Activated T-helper 1 cell treated with anti-CD3 and anti-CD28 coated beads, Interleukin-12 subunit alpha, Interleukin-12 subunit beta, Interleukin-2, Interleukin-4 antibody, amounts not matched to agents 30 ng/mL and 10 ng/mL and 1 ng/mL, durations not matched to agents 14 hours and 24 hours and 36 hours (primary cell): ENCODE measurements at regions of chr3 and their contacts with region 1.

Region 1: DNA sequence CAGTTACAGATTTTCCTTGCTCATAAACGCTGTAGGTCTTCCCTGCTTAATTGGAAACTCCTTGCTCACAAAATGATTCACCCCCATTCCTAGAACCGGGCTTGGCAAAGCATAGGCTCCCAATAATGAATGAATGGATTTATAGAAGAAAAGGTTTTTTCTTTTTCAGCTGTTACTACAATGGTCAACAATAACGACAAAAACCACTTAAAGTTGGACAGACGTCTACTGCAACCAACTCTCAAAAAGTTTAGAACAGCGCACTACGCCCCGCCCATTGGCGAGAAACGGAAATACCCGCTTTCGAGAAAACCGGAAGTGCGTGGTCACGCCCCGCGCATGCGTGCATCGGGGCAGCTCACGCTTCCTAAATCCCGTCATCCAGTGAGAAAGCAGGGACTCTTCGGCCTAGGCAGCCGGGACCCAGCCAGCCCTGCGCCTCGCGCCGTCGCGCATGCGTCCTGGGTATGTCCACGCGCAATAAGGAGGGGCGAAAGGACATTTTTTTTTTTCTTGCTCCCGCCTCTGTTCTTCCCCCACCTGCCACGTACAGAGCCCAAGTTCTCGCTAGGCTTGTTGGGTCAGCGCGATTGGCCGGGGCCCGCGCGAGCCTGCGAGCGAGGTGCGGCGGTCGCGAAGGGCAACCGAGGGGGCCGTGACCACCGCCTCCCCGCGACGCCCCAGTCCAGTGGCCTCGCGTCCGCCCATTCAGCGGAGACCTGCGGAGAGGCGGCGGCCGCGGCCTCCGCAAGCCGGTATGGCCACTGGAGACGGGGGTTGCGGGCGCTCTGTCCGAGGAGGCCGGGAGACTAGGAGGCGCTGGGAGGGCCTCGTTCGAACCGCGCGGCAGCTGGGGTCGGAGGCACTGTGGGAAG is at the start of gene TFG:
- DNase-seq: peak; percentile 98
- H3K4me3 Mint-ChIP-seq: peak within 1 kb of the TSS; percentile 84
- H3K27ac Mint-ChIP-seq: peak within 1 kb of the TSS; percentile 90
- H3K4me1 Mint-ChIP-seq: peaks cover 33% of the 10 kb centered on the region
- H3K27me3 Mint-ChIP-seq: no peaks in the 10 kb centered on the region
- total RNA-seq, gene TFG: 73.0 and 75.3 TPM in 2 replicates

Region 2: DNA sequence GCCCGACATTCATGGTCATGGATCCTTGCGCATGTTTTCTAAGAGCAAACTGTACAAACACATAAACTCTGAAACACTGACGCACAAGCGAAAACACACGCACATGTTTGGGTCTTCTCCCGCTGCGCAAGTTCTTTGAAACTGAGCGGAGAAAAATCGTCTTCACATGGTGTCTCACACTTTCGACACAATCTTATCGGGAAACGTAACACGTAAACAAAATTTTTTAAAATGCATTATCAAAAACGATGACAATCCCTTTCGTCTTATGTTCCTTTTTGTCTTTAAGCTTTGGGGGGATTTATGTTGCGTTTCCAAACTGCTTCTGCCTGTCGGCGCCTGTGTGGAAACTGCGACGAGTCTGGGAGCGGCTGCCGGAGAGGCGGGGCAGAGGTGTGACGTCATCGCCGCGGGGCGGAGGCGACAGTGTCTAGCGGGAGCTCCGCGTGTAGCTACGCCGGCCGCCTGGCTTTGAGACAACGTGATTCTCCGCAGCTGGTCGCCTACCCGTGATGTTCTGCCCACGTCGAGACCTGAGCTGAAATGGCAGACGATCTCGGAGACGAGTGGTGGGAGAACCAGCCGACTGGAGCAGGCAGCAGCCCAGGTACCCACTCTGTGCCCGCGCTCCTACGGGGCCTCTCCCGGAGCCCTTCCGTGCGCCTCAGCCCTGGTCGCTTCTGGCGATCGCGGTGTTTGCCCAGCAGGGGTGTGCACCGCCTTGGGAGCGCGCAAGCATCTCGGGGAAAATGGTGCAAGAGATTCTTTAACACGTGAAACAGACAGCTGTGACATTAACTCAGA is 891.6 kb before region 1 on chr3 and contains the start of gene CMSS1:
- intact Hi-C with region 1: loop called (anchors 1 kb)
- DNase-seq: peak; percentile 92
- H3K4me3 Mint-ChIP-seq: peak within 1 kb of the TSS; percentile 88
- H3K27ac Mint-ChIP-seq: peak within 1 kb of the TSS; percentile 90
- H3K4me1 Mint-ChIP-seq: peaks cover 35% of the 10 kb centered on the region
- H3K27me3 Mint-ChIP-seq: no peaks in the 10 kb centered on the region
- total RNA-seq, gene CMSS1: 108 and 121 TPM in 2 replicates

Region 3: GRCh38 chr3:100316641-100317069 is 392.5 kb before region 1 on chr3:
- intact Hi-C with region 1: loop called (anchors 5 kb)
- DNase-seq: peak; percentile 28
- H3K4me3 Mint-ChIP-seq: no peak overlapping the region
- H3K27ac Mint-ChIP-seq: peak overlapping the region; percentile 18
- H3K4me1 Mint-ChIP-seq: peaks cover 15% of the 10 kb centered on the region
- H3K27me3 Mint-ChIP-seq: no peaks in the 10 kb centered on the region

Region 4: GRCh38 chr3:100463002-100463401 is 246.2 kb before region 1 on chr3:
- intact Hi-C with region 1: loop called (anchors 10 kb)
- DNase-seq: no peak
- H3K4me3 Mint-ChIP-seq: no peak overlapping the region
- H3K27ac Mint-ChIP-seq: no peak overlapping the region
- H3K4me1 Mint-ChIP-seq: peaks cover 11% of the 10 kb centered on the region
- H3K27me3 Mint-ChIP-seq: peaks cover 2% of the 10 kb centered on the region

Region 5: GRCh38 chr3:100650651-100651611 is 58.3 kb before region 1 on chr3:
- intact Hi-C with region 1: loop called (anchors 1 kb)
- DNase-seq: no peak
- H3K4me3 Mint-ChIP-seq: peak overlapping the region; percentile 7
- H3K27ac Mint-ChIP-seq: peak overlapping the region; percentile 32
- H3K4me1 Mint-ChIP-seq: peaks cover 13% of the 10 kb centered on the region
- H3K27me3 Mint-ChIP-seq: no peaks in the 10 kb centered on the region

Region 6: DNA sequence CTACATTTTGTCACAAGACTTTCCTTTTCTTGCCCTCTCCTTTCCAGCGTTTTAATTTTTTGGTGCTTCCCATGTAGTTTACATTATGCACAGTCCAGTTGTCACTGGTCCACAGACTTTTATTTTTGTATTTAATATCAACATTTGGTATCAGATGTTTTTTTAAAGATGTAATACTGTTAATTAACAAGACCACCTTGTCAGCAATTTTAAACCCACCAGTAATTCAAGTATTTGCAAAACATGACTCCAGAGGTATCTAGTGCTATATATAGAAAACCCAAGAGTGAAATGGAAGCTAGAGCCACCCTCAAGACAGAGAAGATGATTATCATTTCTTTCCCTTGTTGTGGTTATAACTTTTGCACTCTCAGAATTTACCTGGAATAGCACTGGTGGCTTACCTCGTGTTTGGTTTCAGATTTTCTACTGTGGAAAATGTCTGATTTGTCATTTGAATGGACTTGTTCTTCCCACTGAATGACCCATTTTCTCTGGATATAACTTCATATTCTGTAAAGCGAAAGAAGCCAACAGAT is 56.3 kb after region 1 on chr3:
- intact Hi-C with region 1: loop called (anchors 1 kb)
- DNase-seq: no peak
- H3K4me3 Mint-ChIP-seq: no peak overlapping the region
- H3K27ac Mint-ChIP-seq: no peak overlapping the region
- H3K4me1 Mint-ChIP-seq: peaks cover 9% of the 10 kb centered on the region
- H3K27me3 Mint-ChIP-seq: peaks cover 5% of the 10 kb centered on the region

Region 7: DNA sequence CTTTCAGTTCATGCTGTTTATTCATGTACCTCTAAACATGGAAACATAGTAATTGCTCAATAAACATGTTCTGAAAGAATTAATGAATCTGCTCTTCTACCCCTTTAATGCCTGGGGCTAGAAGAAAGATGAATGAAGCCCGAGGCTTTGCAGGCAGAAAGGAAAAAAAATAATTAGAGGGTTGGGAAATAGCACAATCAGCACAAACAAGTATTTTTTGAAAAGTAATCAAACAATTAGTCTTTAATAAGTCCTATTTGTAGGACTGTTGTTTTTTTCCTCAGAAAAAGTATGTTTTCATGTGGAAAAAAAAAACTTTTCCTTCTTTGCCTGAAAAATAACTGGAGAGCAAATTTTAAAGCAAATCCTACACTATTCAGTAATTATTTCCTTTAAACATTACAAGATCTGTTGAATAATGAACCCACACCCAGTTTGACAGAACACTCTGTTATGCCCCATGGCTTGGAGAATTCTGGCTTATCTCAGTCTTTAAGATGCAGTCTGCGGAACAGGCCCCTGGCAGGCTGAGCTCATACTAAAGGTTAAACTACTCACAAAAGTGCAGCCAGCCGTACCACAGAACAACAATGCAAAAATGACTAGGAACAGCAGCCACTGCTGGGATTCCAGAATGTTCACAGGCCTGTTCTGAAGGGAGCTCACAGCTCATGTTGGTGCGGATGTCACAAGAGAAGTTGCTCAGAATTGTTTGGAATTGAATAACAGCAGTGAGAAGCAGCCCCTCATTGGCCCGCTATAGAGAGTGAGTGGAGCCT is 204.9 kb after region 1 on chr3:
- intact Hi-C with region 1: no loop called
- DNase-seq: no peak
- H3K4me3 Mint-ChIP-seq: no peak overlapping the region
- H3K27ac Mint-ChIP-seq: no peak overlapping the region
- H3K4me1 Mint-ChIP-seq: no peaks in the 10 kb centered on the region
- H3K27me3 Mint-ChIP-seq: peaks cover 6% of the 10 kb centered on the region

Region 8: DNA sequence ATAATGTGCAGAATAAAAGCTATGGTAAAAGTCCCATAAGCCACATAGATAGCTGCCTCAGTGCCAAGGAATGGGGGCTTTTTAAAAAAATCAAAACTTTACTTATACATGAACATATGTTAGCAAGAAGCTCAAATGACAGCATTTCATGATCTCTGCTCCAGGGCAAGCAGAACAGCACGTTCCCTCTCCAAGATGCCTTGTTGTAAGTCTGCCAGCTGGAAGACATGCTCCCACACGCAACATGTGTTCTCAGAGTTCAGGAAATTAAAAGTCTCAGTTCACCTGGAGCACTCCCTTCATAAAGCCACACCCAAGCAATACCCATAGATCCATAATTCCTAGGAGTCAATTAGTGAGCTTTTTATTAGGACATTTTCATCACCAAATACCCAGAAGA is 231.8 kb after region 1 on chr3:
- intact Hi-C with region 1: no loop called
- DNase-seq: no peak
- H3K4me3 Mint-ChIP-seq: no peak overlapping the region
- H3K27ac Mint-ChIP-seq: no peak overlapping the region
- H3K4me1 Mint-ChIP-seq: no peaks in the 10 kb centered on the region
- H3K27me3 Mint-ChIP-seq: no peaks in the 10 kb centered on the region

Region 9: GRCh38 chr3:101573449-101574387 is 864.5 kb after region 1 on chr3 and contains the start of gene PCNP:
- intact Hi-C with region 1: loop called (anchors 2 kb)
- DNase-seq: peak; percentile 99
- H3K4me3 Mint-ChIP-seq: peak within 1 kb of the TSS; percentile 94
- H3K27ac Mint-ChIP-seq: peak within 1 kb of the TSS; percentile 99
- H3K4me1 Mint-ChIP-seq: peaks cover 68% of the 10 kb centered on the region
- H3K27me3 Mint-ChIP-seq: no peaks in the 10 kb centered on the region
- total RNA-seq, gene PCNP: 182 and 190 TPM in 2 replicates